Naive thymus-derived CD4-positive, alpha-beta T cell (primary cell): ENCODE measurements at regions of chr14 and their contacts with region 1.

Region 1: DNA sequence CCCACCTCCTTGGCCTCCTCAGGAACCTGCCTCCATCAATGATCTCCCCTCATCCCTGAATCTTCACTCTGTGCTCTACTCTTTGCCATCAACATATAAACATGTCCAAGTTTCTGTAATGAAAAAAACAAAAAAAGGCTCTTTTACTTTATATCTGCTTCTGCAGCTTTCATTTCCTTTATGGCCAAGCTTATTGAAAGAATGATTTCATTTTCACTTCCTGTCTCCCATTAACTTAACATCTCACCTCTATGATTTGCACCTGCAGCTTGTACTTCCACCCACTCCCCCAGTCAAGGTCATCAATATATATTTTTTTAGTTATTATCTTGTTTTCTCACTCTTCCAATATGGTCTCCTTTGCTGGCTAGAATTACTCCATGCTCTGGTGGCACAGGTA is 15.6 kb upstream of the RNU6-7 start:
- DNase-seq: no peak
- ATAC-seq: no peak
- H3K4me3 ChIP-seq: no peak overlapping the region
- H3K4me3 Mint-ChIP-seq: no peak overlapping the region
- H3K27ac ChIP-seq: no peak overlapping the region
- H3K27ac Mint-ChIP-seq: no peak overlapping the region
- H3K4me1 ChIP-seq: no peaks in the 10 kb centered on the region
- H3K4me1 Mint-ChIP-seq: peaks cover 5 to 8% (median 6%) of the 10 kb centered on the region in 7 donors
- H3K27me3 ChIP-seq: no peaks in the 10 kb centered on the region
- H3K27me3 Mint-ChIP-seq: peaks cover 0 to 19% (median 5%) of the 10 kb centered on the region in 5 donors

Region 2: GRCh38 chr14:32109676-32110547 is 76.3 kb before region 1 on chr14:
- CTCF ChIA-PET with region 1: no interaction called
- POLR2A ChIA-PET with region 1: no interaction called
- intact Hi-C with region 1: loop called in 1 of 2 experiments (anchors 5 kb)
- DNase-seq: no peak
- ATAC-seq: no peak
- H3K4me3 ChIP-seq: no peak overlapping the region
- H3K4me3 Mint-ChIP-seq: no peak overlapping the region
- H3K27ac ChIP-seq: no peak overlapping the region
- H3K27ac Mint-ChIP-seq: peak overlapping the region in 2 of 9 donors; percentile 22 to 29
- H3K4me1 ChIP-seq: peaks cover 0 to 11% of the 10 kb centered on the region in 2 donors
- H3K4me1 Mint-ChIP-seq: peaks cover 4 to 35% (median 24%) of the 10 kb centered on the region in 7 donors
- H3K27me3 ChIP-seq: no peaks in the 10 kb centered on the region
- H3K27me3 Mint-ChIP-seq: no peaks in the 10 kb centered on the region

Region 3: DNA sequence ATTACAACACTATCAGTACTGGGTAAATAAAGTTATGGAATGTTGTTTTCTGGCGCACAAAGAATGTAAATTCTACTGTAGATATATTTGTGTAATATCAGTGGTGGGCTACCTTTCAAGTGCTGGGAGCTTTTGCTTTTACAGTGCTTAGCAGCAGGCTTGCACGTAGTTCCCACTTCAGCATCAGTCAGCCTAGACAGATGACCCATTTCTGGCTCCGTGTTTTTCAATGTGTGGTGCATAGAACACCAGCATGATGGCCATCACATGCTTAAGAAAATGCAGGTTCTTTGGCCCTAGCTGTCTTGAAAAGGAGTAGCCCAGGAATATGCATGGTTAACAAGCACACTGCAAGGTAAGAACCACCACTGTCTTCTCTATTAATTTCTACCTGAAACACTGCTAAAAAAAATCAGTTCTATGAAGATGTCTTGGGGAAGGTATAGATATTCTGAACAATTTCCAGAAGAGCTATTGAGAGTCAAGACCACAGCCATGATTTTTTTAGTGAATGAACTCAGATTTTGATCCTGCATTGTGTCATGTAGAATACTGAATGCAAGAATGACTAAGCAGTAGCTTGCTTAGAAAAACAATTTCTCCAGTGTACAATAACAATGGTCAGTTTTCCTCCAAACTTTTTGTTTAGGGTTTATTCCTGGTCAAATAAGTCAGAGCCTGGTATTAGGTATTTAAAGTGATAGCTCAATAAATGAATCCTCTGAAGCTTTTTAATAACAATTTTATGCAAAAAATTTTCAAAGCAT is 338.5 kb after region 1 on chr14:
- CTCF ChIA-PET with region 1: no interaction called
- POLR2A ChIA-PET with region 1: no interaction called
- intact Hi-C with region 1: no loop called
- DNase-seq: no peak
- ATAC-seq: no peak
- H3K4me3 ChIP-seq: no peak overlapping the region
- H3K4me3 Mint-ChIP-seq: no peak overlapping the region
- H3K27ac ChIP-seq: no peak overlapping the region
- H3K27ac Mint-ChIP-seq: no peak overlapping the region
- H3K4me1 ChIP-seq: no peaks in the 10 kb centered on the region
- H3K4me1 Mint-ChIP-seq: no peaks in the 10 kb centered on the region
- H3K27me3 ChIP-seq: no peaks in the 10 kb centered on the region
- H3K27me3 Mint-ChIP-seq: peaks cover 0 to 8% (median 0%) of the 10 kb centered on the region in 5 donors